ENCODE measurements at regions of chr11 and their contacts with region 1.

Region 1: DNA sequence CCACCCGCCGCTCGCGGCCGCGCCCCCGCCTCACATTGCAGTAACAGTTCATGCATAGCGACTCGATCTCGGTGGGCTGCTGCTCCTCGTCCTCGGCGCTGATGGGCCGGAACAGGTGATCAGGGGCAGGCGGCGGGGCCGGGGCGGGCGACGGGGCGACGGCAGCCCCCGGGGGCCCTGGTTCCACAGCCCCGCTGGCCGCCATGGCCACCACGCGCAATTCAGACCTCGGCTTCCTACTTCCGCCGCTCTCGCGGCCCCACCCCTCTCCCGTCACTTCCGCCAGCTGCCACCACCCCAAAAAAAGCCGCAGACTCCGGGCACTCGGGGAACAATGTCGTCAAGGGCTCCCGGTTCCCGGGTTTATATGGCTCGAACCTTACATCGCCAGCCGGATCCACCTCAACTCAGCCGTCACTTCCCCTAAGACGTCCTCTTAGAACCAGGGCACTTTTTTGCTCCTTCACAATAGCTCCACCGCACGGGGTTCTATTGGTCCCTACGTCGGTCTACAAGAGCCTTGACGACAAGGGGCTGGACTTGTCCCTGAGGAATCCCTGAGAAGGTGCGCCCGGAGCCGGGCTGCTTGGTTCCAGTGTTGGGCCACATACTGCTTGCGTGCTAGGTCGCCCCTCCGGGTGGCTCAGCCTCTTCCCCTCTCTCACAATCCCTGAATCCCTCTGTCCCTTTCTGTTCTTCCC is at the start of gene ZPR1:
- DNase-seq: peak; percentile 74
- H3K4me3 ChIP-seq: peak within 1 kb of the TSS; percentile 90
- H3K27ac ChIP-seq: no peak within 1 kb of the TSS
- H3K4me1 ChIP-seq: peaks cover 22% of the 10 kb centered on the region
- CTCF ChIP-seq: no peak
- total RNA-seq, gene ZPR1: 57.4 and 65.0 TPM in 2 replicates

Region 2: DNA sequence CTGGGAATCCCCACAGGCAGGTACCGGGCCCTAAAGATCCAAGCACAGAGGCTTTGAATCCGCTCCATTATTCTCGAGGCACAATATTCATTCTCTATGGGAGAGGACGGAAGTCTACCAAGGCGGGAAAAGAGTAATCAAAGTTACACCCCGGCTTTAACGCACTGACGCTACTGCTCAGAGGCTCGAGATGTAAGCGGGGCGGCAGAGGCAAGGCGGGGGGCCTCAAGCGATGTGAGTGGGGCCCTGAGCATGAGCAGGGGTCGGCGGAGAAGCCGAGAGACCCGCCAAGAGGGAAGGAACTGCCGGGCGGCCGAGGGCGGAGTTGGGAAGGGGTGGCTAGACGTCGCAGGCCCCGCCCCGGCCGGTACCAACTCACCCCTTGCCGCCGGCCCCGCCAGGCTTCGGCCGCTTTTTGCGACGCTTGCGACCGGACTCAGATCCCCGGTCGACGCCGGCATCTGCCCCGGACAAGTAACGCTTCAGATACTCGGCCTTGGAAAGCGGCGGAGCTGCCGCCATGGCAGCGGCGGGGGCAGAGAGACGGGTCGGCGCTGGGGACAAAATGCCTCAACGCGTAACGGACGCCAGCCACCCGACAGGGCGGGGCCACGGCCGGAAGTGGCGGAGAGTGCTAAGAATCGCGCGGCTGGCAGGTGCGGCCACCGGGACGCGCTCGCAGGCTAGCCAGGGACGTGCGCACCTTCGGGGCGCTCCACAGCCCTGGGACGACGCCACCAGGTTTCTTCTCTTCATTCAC is 15.3 kb before region 1 on chr11 and contains the start of gene BUD13:
- CTCF ChIA-PET with region 1: interaction called, 4 read pairs
- POLR2A ChIA-PET with region 1: interaction called, 19 read pairs
- intact Hi-C with region 1: loop called (anchors 1 kb)
- DNase-seq: peak; percentile 94
- H3K4me3 ChIP-seq: peak within 1 kb of the TSS; percentile 81
- H3K27ac ChIP-seq: peak within 1 kb of the TSS; percentile 81
- H3K4me1 ChIP-seq: peaks cover 43% of the 10 kb centered on the region
- CTCF ChIP-seq: no peak
- total RNA-seq, gene BUD13: 28.6 and 34.1 TPM in 2 replicates

Region 3: GRCh38 chr11:116835791-116836631 is 48.1 kb after region 1 on chr11:
- CTCF ChIA-PET with region 1: interaction called, 5 read pairs
- POLR2A ChIA-PET with region 1: interaction called, 5 read pairs
- intact Hi-C with region 1: loop called (anchors 5 kb)
- DNase-seq: peak; percentile 89
- H3K4me3 ChIP-seq: peak overlapping the region; percentile 41
- H3K27ac ChIP-seq: no peak overlapping the region
- H3K4me1 ChIP-seq: peaks cover 13% of the 10 kb centered on the region
- CTCF ChIP-seq: peak; percentile 75

Region 4: DNA sequence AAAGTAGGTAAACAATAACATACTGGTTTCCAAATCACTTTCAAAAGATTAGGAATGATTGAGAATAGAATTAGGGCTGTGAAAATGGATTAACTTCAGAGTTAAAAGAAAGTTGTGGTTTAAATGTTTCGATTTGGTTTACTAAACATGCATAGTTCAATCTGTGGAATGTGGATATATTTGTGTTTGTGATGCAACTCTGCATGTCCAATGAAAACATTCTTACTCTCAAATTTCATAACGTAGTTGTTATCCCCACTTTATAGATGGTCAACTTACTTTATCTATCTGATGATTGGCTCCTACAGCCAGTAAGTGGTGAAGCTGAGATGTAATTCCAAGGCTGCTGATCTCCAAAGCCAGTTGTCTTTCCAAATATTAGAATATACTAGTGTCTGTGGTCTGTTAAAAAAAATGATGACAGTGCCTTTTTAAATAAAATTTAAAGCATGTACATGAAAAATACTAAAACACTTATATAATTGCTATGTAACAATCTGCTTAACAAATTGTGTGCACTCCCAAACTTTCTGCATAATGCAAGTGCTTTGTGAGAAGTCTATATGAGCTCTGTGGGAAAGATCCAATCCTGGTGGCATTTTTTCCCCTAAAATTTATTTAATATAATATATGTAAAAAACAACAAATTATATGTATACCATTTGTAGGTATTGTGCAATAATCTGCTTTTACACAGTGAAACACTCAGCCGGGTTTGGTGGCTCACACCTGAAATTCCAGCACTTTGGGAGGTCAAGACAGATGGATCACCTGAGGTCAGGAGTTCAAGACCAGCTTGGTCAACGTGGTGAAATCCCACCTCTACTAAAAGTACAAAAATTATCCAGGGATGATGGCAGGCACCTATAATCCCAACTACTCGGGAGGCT is 320.0 kb after region 1 on chr11:
- CTCF ChIA-PET with region 1: no interaction called
- POLR2A ChIA-PET with region 1: interaction called, 5 read pairs
- intact Hi-C with region 1: loop called (anchors 1 kb)
- DNase-seq: no peak
- H3K4me3 ChIP-seq: no peak overlapping the region
- H3K27ac ChIP-seq: no peak overlapping the region
- H3K4me1 ChIP-seq: peaks cover 9% of the 10 kb centered on the region
- CTCF ChIP-seq: no peak

Region 5: DNA sequence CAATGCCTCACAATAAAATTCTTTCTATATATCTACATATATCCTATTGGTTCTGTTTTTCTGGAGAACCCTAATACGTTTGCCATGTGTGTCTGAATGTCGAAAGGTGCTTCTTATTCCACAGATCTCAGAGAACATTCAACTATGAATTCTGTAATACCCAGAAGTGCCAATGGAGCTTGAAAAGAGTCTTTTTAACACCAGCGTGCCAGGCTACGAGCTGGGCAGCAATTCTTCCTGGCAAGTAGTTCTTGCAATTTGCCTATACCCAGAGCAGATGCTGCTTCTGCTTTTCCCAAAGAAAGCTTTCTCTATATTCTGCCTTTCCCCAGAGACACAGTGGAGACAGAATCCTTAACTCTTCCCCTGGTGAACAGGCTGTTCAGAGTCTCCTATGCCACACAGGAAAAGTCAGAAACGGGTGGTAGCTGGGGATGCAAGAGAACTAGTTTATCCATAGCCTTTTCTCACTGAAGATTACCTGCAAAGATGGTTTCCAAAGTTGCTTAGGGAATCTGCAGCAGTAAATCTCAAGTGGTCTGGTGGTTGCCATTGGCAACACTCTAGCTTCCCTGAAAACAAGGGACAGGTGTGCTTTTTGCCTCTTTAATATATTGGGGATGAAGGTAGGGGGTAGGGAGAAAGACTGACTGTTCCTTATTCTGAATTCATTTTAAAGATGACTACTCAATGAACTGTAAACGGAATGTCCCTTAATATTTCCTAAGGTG is 339.4 kb after region 1 on chr11:
- CTCF ChIA-PET with region 1: no interaction called
- POLR2A ChIA-PET with region 1: no interaction called
- intact Hi-C with region 1: loop called (anchors 5 kb)
- DNase-seq: no peak
- H3K4me3 ChIP-seq: no peak overlapping the region
- H3K27ac ChIP-seq: no peak overlapping the region
- H3K4me1 ChIP-seq: no peaks in the 10 kb centered on the region
- CTCF ChIP-seq: no peak

Region 6: DNA sequence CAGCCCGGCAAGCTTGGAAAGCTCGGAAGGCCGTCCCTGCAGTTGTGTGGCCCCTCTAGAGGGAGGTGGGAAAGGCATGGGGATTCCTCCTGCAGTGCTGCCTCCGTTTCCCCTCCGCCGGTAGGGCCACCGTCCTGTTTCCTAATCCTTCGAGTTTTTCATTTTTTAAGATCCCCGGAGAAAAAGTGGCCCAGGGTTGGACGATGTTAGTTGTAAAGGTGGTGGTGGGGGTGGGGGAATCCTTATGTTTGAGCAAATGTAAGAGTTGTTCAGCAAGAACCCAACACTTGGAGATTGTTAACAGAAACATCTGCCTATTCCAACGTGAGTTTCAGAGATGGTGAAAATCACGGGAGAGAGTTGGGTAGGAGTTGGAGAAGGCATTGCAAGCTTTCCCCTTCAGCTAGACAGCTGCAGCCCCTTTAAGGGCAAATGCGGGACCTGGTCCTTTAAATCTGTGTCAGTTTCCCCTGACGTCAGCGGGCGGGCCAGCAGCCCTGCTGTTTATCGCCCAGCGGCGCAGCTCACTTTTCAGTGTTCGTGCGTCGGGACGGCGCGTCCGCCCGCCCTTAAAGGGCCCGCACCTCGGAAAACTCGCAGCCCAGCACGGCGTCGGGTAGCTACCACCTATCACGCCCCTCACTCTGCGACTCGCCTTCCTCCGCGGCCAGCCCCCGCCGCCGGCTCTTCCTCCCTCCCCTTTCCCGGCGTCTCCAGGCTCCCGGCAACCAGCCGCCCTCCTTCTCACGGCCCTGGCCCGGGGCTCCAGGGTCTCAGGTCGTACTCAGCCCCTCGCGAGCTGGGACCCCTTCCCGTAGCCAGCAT is 390.5 kb after region 1 on chr11 and contains the start of gene SIDT2:
- CTCF ChIA-PET with region 1: interaction called, 4 read pairs
- POLR2A ChIA-PET with region 1: interaction called, 6 read pairs
- intact Hi-C with region 1: loop called (anchors 1 kb)
- DNase-seq: peak; percentile 96
- H3K4me3 ChIP-seq: peak within 1 kb of the TSS; percentile 88
- H3K27ac ChIP-seq: peak within 1 kb of the TSS; percentile 52
- H3K4me1 ChIP-seq: peaks cover 30% of the 10 kb centered on the region
- CTCF ChIP-seq: no peak
- total RNA-seq, gene SIDT2: 18.3 and 18.6 TPM in 2 replicates

Region 7: GRCh38 chr11:117232092-117232878 is 444.3 kb after region 1 on chr11 and contains the start of gene RNF214:
- CTCF ChIA-PET with region 1: no interaction called
- POLR2A ChIA-PET with region 1: interaction called, 3 read pairs
- intact Hi-C with region 1: loop called (anchors 5 kb)
- DNase-seq: peak; percentile 88
- H3K4me3 ChIP-seq: peak within 1 kb of the TSS; percentile 99
- H3K27ac ChIP-seq: peak within 1 kb of the TSS; percentile 84
- H3K4me1 ChIP-seq: peaks cover 35% of the 10 kb centered on the region
- CTCF ChIP-seq: peak; percentile 83
- total RNA-seq, gene RNF214: 10.9 and 11.2 TPM in 2 replicates

Measured in OCI-LY7 (cell line).